ENCODE measurements at regions of chr10 and their contacts with region 1.

Region 1: DNA sequence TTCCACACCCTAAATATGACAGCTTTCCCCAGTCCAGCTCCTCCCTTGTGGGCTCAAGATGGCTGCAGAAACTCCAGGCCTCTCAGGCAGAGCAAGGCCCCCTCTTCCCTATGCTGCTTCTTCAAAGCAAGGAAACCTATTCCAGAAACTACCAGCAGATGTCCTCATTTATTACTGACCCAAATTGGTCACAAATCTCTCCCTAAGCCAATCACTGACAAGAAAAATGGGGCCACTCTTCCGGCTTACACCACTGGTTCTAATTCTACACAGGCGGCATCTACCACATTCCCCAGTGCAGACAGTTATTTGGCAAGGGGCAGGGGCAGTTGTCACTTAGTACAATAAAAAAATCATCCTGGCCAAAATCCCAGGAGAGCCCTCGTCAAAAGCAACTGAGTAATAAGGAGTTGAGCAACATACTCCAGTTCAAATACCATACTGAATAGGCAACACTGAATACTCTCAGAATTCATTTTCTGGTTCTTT is 150.4 kb downstream of the SFMBT2 start:
- DNase-seq: peak; percentile 78
- ATAC-seq: peak; percentile 29
- H3K4me3 ChIP-seq: no peak overlapping the region
- H3K27ac ChIP-seq: peak overlapping the region; percentile 89
- H3K4me1 ChIP-seq: peaks cover 45% of the 10 kb centered on the region
- H3K27me3 ChIP-seq: no peaks in the 10 kb centered on the region
- CTCF ChIP-seq: peak; percentile 59

Region 2: GRCh38 chr10:7121154-7121810 is 139.2 kb before region 1 on chr10:
- CTCF ChIA-PET with region 1: no interaction called
- POLR2A ChIA-PET with region 1: no interaction called
- intact Hi-C with region 1: loop called (anchors 5 kb)
- DNase-seq: peak; percentile 51
- ATAC-seq: peak; percentile 42
- H3K4me3 ChIP-seq: no peak overlapping the region
- H3K27ac ChIP-seq: no peak overlapping the region
- H3K4me1 ChIP-seq: no peaks in the 10 kb centered on the region
- H3K27me3 ChIP-seq: no peaks in the 10 kb centered on the region
- CTCF ChIP-seq: peak; percentile 60

Region 3: DNA sequence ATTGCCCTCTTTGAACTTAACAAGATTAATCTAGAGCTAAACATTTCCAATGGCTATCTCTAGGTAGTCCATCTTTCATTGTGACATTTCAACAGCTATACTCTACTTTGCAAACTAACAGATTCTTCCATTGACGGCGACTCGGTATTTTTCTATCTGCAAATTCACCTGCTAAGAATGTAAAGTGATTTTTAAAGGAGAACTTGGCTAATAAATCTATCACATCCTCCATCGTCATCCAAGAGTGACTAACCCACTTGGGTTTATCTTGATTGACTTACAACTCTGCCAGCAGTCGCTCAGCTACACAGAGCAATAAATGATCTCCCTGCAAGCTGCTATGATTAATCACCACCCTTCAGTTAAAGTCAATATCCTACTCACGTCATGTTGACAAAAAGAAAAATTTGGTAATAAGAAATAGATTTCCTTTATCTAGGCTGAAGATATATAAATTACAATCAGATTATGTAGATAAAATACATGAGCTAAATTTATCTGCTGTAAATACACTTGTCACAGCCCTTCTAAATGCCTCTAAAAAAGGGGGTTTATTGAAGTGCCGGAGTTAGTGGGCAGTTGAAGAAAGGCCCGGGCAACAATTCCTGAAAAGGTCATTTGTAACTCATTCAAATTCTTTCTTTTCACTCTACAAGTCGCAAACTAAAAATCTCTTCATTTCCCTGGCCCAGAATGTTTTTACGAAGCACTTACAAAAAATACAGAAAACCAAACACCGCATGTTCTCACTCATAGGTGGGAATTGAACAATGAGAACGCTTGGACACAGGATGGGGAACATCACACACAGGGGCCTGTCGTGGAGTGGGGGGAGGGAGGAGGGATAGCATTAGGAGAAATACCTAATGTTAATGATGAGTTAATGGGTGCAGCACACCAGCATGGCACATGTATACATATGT is 51.1 kb after region 1 on chr10:
- CTCF ChIA-PET with region 1: no interaction called
- POLR2A ChIA-PET with region 1: no interaction called
- intact Hi-C with region 1: loop called (anchors 5 kb)
- DNase-seq: peak; percentile 89
- ATAC-seq: peak; percentile 97
- H3K4me3 ChIP-seq: no peak overlapping the region
- H3K27ac ChIP-seq: peak overlapping the region; percentile 86
- H3K4me1 ChIP-seq: peaks cover 12% of the 10 kb centered on the region
- H3K27me3 ChIP-seq: no peaks in the 10 kb centered on the region
- CTCF ChIP-seq: no peak

Region 4: GRCh38 chr10:7340179-7340874 is 79.9 kb after region 1 on chr10:
- CTCF ChIA-PET with region 1: no interaction called
- POLR2A ChIA-PET with region 1: no interaction called
- intact Hi-C with region 1: no loop called
- DNase-seq: no peak
- ATAC-seq: no peak
- H3K4me3 ChIP-seq: no peak overlapping the region
- H3K27ac ChIP-seq: no peak overlapping the region
- H3K4me1 ChIP-seq: no peaks in the 10 kb centered on the region
- H3K27me3 ChIP-seq: 0 out of 2 replicates have a peak, but pooled peaks cover 5% of the 10 kb centered on the region
- CTCF ChIP-seq: no peak

Region 5: GRCh38 chr10:7374795-7375194 is 114.3 kb after region 1 on chr10:
- CTCF ChIA-PET with region 1: no interaction called
- POLR2A ChIA-PET with region 1: no interaction called
- intact Hi-C with region 1: loop called (anchors 1 kb)
- DNase-seq: peak; percentile 85
- ATAC-seq: peak; percentile 79
- H3K4me3 ChIP-seq: peak overlapping the region; percentile 41; the same call in 1 of the 2 replicates
- H3K27ac ChIP-seq: peak overlapping the region; percentile 97
- H3K4me1 ChIP-seq: peaks cover 19% of the 10 kb centered on the region
- H3K27me3 ChIP-seq: no peaks in the 10 kb centered on the region
- CTCF ChIP-seq: no peak

Region 6: GRCh38 chr10:7410862-7411670 is 150.6 kb after region 1 on chr10 and contains the start of gene SFMBT2:
- CTCF ChIA-PET with region 1: no interaction called
- POLR2A ChIA-PET with region 1: no interaction called
- intact Hi-C with region 1: loop called (anchors 1 kb)
- DNase-seq: peak; percentile 27
- ATAC-seq: peak; percentile 37
- H3K4me3 ChIP-seq: peak within 1 kb of the TSS; percentile 81
- H3K27ac ChIP-seq: peak within 1 kb of the TSS; percentile 32
- H3K4me1 ChIP-seq: no peaks in the 10 kb centered on the region
- H3K27me3 ChIP-seq: peaks cover 10% of the 10 kb centered on the region
- CTCF ChIP-seq: no peak
- total RNA-seq, gene SFMBT2: 1.9 and 2.1 TPM in 2 replicates

Region 7: DNA sequence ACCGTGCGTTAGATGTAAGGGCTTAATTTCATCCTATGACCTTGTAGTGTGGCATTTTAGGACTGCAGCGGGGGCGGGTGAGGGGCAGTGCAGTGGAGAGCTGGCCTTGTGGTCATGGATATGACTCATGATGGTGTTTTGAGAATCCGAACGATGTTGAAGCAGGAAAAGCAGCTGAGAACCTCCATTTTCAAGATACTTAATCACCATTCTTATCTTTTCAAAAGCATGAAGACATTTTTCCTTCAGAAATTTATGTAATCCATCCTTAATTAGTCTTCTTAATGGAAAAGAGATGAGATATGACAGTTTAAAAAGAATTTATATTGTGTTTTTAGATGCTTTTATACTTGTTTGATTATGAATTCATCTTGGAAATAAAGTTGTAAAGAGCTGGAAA is 537.1 kb after region 1 on chr10:
- CTCF ChIA-PET with region 1: no interaction called
- POLR2A ChIA-PET with region 1: no interaction called
- intact Hi-C with region 1: no loop called
- DNase-seq: peak; percentile 44
- ATAC-seq: peak; percentile 82
- H3K4me3 ChIP-seq: no peak overlapping the region
- H3K27ac ChIP-seq: 0 out of 2 replicates have a peak overlapping the region, but pooled peaks have one; percentile 25
- H3K4me1 ChIP-seq: peaks cover 15% of the 10 kb centered on the region
- H3K27me3 ChIP-seq: no peaks in the 10 kb centered on the region
- CTCF ChIP-seq: no peak